Activated naive CD4-positive, alpha-beta T cell treated with anti-CD3 and anti-CD28 coated beads for 36 hours (primary cell): ENCODE measurements at regions of chr17 and their contacts with region 1.

Region 1: GRCh38 chr17:50361561-50362480 is 11.2 kb downstream of the MRPL27 start:
- DNase-seq: peak; percentile 78
- H3K4me3 Mint-ChIP-seq: no peak overlapping the region
- H3K27ac Mint-ChIP-seq: peak overlapping the region; percentile 84
- H3K4me1 Mint-ChIP-seq: peaks cover 9% of the 10 kb centered on the region
- H3K27me3 Mint-ChIP-seq: no peaks in the 10 kb centered on the region

Region 2: DNA sequence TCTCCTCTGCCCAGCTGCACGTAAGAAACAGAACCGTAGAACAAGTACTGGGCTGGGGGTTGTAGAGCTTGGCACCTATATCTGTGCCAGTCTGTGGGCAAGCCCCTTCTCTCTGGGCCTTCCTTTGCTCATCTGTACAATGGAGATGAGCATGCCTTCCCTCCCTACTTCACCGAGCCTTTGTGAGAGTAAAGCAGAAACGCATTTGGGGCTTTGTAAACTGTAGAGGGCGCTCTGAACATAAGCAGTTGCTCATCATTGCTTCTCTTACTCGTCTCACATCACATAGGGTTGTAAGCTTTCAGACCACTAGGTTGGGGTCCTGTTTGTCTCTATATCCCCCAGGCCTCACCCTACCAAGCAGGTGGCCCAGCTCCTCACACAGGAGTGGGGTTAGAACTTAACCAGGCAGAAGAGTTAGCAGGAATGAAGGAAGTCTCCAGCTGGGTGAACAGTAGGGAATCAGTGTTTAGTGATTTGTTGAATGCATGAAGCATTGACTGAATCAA is 246.9 kb before region 1 on chr17:
- CTCF ChIA-PET with region 1: no interaction called
- intact Hi-C with region 1: no loop called
- DNase-seq: peak; percentile 76
- H3K4me3 Mint-ChIP-seq: no peak overlapping the region
- H3K27ac Mint-ChIP-seq: no peak overlapping the region
- H3K4me1 Mint-ChIP-seq: peaks cover 7% of the 10 kb centered on the region
- H3K27me3 Mint-ChIP-seq: peaks cover 26% of the 10 kb centered on the region

Region 3: GRCh38 chr17:50331085-50331791 is 30.6 kb before region 1 on chr17:
- CTCF ChIA-PET with region 1: interaction called, 11 read pairs
- intact Hi-C with region 1: no loop called
- DNase-seq: no peak
- H3K4me3 Mint-ChIP-seq: no peak overlapping the region
- H3K27ac Mint-ChIP-seq: no peak overlapping the region
- H3K4me1 Mint-ChIP-seq: peaks cover 14% of the 10 kb centered on the region
- H3K27me3 Mint-ChIP-seq: no peaks in the 10 kb centered on the region

Region 4: DNA sequence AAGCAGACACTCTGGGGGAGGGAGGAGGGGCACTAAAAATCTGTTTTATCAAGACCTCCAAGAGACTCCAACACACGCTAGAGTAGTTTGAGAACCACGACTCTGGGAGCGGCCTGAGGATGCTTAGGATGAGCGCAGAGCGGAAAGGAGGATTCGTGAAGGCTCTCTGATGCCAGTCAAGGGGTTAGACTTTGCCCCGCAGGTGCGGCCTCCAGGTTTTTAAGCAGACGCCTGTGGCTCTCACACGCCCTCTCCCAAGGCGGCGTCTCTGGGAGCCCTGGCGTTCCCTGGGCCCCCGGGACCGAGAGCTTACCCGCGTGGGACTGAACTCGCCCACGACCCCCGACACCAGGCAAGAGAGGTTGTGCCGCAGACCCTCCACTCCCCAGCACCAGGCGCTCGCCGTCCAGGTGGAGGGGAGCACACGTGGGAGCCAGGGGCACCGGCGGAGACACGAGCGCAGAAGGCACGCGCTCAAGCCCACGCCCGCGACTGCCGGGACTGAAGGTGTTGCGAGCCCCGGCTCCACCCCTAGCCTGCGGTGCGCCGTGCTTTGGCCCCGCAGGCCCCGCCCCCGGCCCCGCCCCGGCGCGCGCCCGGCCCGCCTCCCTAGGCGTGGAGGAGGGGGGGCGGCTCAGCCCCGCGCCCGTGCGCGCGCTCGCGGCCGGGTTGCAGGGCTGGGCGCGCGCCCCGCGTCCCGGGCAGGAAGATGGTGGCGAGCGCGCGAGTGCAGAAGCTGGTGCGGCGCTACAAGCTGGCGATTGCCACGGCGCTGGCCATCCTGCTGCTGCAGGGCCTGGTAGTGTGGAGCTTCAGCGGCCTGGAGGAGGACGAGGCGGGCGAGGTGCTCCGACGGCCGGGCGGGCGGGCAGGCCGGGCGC is 16.1 kb before region 1 on chr17 and contains the start of gene XYLT2:
- CTCF ChIA-PET with region 1: interaction called, 34 read pairs
- intact Hi-C with region 1: loop called (anchors 1 kb)
- DNase-seq: peak; percentile 90
- H3K4me3 Mint-ChIP-seq: peak within 1 kb of the TSS; percentile 89
- H3K27ac Mint-ChIP-seq: peak within 1 kb of the TSS; percentile 88
- H3K4me1 Mint-ChIP-seq: peaks cover 29% of the 10 kb centered on the region
- H3K27me3 Mint-ChIP-seq: no peaks in the 10 kb centered on the region
- total RNA-seq, gene XYLT2: 21.1 to 21.8 TPM

Region 5: DNA sequence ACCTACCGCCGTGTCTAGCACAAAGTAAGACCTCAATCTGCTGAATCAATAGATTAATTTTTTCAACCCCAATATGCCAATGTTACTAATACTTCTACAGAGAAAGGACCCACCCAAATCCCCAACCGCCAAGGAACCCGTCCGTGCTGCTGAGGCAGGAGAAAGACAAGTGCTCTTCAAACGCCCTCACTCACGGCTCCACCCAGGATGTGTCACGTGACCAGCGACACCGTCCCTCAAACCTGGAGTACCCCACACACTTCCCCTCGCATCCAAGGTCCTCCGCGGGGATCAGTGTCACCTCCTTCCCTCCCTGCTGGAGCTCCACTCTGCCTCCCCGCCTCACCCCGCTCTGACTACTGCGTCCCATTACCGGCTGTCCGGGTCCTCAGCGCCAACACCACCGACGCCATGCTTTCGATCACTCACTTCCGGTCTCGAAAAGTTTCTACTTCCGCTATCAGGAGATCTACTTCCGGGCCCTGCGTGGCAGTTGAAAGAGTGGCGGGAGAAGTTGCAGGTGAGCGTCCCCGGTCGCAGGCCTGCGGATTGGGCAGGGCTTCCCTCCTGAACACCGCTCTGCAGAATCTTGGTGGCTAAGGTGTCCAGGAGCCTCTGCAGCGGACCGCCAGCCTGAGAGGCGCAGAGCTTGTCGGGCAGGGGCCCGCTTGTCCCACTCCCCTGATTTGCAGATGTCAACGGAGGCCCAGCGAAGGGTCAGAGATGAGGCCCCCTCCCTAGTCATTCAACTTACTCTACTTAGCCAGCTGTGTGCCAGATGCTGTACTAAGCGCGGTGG is 11.1 kb after region 1 on chr17 and contains the starts of genes EME1 and MRPL27:
- CTCF ChIA-PET with region 1: interaction called, 44 read pairs
- intact Hi-C with region 1: loop called (anchors 1 kb)
- DNase-seq: peak; percentile 91
- H3K4me3 Mint-ChIP-seq: peak within 1 kb of the TSS; percentile 99
- H3K27ac Mint-ChIP-seq: peak within 1 kb of the TSS; percentile 99
- H3K4me1 Mint-ChIP-seq: peaks cover 30% of the 10 kb centered on the region
- H3K27me3 Mint-ChIP-seq: no peaks in the 10 kb centered on the region
- total RNA-seq, gene EME1: 68.9 to 69.8 TPM
- total RNA-seq, gene MRPL27: 55.1 to 58.2 TPM

Region 6: GRCh38 chr17:50380369-50381259 is 18.8 kb after region 1 on chr17:
- CTCF ChIA-PET with region 1: interaction called, 44 read pairs
- intact Hi-C with region 1: no loop called
- DNase-seq: no peak
- H3K4me3 Mint-ChIP-seq: no peak overlapping the region
- H3K27ac Mint-ChIP-seq: no peak overlapping the region
- H3K4me1 Mint-ChIP-seq: no peaks in the 10 kb centered on the region
- H3K27me3 Mint-ChIP-seq: no peaks in the 10 kb centered on the region

Region 7: GRCh38 chr17:50397111-50397918 is 35.5 kb after region 1 on chr17 and contains the start of gene LRRC59:
- CTCF ChIA-PET with region 1: interaction called, 56 read pairs
- intact Hi-C with region 1: loop called (anchors 5 kb)
- DNase-seq: peak; percentile 92
- H3K4me3 Mint-ChIP-seq: peak within 1 kb of the TSS; percentile 92
- H3K27ac Mint-ChIP-seq: peak within 1 kb of the TSS; percentile 79
- H3K4me1 Mint-ChIP-seq: peaks cover 32% of the 10 kb centered on the region
- H3K27me3 Mint-ChIP-seq: no peaks in the 10 kb centered on the region
- total RNA-seq, gene LRRC59: 48.1 to 50.1 TPM